Transverse colon (tissue), 4 donors: ENCODE measurements at regions of chrX and their contacts with region 1.

Region 1: GRCh38 chrX:17984415-17984814 is 123.3 kb upstream of the RAI2 start:
- DNase-seq: no peak
- H3K4me3 ChIP-seq: no peak overlapping the region
- H3K27ac ChIP-seq: no peak overlapping the region
- H3K4me1 ChIP-seq: no peaks in the 10 kb centered on the region
- H3K27me3 ChIP-seq: no peaks in the 10 kb centered on the region
- CTCF ChIP-seq: no peak
- EP300 ChIP-seq: no peak
- POLR2A ChIP-seq: no peak

Region 2: DNA sequence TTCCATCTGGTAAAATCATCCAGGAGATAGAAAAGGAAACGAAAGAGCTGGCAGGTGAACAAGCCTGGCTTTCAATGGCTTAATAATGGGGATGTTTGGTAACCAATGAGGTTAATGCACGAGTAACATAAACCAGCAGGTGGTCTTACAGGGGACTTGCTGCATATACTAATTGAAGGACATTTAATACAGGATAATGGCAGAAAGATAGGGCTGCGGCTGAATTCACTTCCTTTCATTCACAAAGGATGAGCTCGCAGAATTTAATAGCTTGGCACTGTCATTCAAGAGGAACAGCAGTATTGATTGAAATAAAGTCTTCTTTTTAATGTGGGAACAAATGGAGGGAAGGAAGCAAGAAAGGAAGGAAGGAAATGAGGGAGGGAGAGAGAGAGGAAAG is 33.0 kb after region 1 on chrX:
- in situ Hi-C with region 1: no loop called
- intact Hi-C with region 1: loop called (anchors 1 kb)
- DNase-seq: no peak
- H3K4me3 ChIP-seq: no peak overlapping the region
- H3K27ac ChIP-seq: no peak overlapping the region
- H3K4me1 ChIP-seq: no peaks in the 10 kb centered on the region
- H3K27me3 ChIP-seq: no peaks in the 10 kb centered on the region
- CTCF ChIP-seq: no peak
- EP300 ChIP-seq: no peak
- POLR2A ChIP-seq: no peak